Gastrocnemius medialis (tissue), 4 donors: ENCODE measurements at regions of chr6 and their contacts with region 1.

Region 1: DNA sequence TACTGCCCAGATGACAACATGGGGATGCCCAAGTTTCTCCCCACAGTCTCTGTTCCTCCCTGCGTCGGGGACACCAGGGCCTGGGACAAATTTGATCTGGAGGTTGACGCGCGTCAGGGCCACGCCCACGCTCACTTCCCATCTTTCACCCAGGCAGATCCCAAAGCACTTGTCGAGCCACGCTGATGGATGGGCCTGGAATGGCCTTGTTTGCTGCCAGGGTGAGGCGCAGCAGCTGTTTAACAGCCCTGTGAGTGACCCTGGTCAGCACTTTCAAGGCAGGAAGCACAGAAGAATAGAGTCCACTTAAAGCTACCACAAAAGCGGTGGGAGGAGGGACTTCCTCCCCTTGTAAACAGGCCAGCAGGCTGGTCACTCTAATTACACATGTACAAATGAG is 324.7 kb upstream of the JARID2 start:
- DNase-seq: peak; percentile 60 to 84
- ATAC-seq: peak; percentile 4 to 8
- H3K4me3 ChIP-seq: no peak overlapping the region
- H3K27ac ChIP-seq: peak overlapping the region; percentile 87 to 97 (median 92)
- H3K4me1 ChIP-seq: peaks cover 41 to 55% of the 10 kb centered on the region in 2 donors
- H3K27me3 ChIP-seq: no peaks in the 10 kb centered on the region
- CTCF ChIP-seq: no peak
- POLR2A ChIP-seq: peak in 1 of 2 donors; percentile 23

Region 2: GRCh38 chr6:14889191-14889590 is 32.0 kb before region 1 on chr6:
- in situ Hi-C with region 1: no loop called
- intact Hi-C with region 1: loop called (anchors 1 kb)
- DNase-seq: no peak
- ATAC-seq: peak in 1 of 2 donors; percentile 50
- H3K4me3 ChIP-seq: no peak overlapping the region
- H3K27ac ChIP-seq: peak overlapping the region; percentile 84 to 89 (median 86)
- H3K4me1 ChIP-seq: peaks cover 21 to 33% of the 10 kb centered on the region in 2 donors
- H3K27me3 ChIP-seq: no peaks in the 10 kb centered on the region
- CTCF ChIP-seq: peak in 1 of 5 experiments; percentile 3
- POLR2A ChIP-seq: no peak

Region 3: DNA sequence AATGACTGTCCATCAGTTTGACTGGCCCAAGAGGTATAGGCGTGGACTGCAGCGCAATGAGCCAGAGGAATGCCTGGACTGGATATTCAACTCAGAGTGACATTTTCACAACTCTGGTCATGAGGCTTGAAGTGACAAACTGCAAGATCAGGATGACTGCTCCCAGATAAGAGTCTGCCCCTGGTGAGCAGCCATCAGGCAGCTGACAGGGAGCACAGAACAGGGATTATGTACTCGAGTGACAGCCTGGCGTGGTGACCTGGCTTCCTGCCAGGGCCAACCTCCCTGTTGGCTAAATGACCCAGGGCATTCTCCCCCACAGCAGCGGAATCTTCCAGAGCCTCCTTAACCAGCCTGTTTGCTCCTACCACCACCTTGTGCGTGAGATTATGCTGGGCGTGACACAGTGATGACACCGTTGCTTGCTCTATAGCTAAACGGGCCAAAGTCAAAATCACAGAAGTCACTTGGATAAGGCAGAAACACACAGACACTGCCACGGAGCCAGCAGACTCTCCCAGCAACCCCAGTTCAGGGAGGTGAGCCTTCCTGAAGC is 115.6 kb after region 1 on chr6:
- in situ Hi-C with region 1: no loop called
- intact Hi-C with region 1: loop called (anchors 1 kb)
- DNase-seq: peak; percentile 93 to 98
- ATAC-seq: peak; percentile 93 to 96
- H3K4me3 ChIP-seq: peak overlapping the region; percentile 33 to 48 (median 38)
- H3K27ac ChIP-seq: peak overlapping the region; percentile 85 to 91 (median 88)
- H3K4me1 ChIP-seq: peaks cover 7 to 27% of the 10 kb centered on the region in 2 donors
- H3K27me3 ChIP-seq: no peaks in the 10 kb centered on the region
- CTCF ChIP-seq: no peak
- POLR2A ChIP-seq: peak; percentile 33 to 63

Region 4: DNA sequence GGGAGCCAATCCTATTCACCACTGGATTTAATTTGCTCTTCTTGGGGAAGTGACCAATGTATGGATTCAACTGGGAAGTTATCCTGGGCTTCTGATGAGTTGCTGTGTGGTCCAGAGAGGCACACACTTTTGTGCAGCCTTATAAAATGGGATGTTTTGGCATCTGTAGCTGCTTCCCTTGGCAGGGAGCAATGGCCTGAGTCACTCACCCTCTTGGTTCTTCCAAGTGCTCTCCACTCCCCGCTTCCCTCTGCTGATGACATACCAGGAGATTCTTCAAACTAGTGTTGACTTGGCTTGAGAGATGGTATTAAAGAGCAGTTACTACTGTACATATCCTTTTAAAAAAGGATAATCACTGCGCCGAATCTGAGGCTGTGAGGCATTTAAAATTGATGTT is 430.5 kb after region 1 on chr6:
- in situ Hi-C with region 1: no loop called
- intact Hi-C with region 1: loop called (anchors 10 kb)
- DNase-seq: peak; percentile 62 to 83
- ATAC-seq: peak; percentile 90 to 93
- H3K4me3 ChIP-seq: no peak overlapping the region
- H3K27ac ChIP-seq: peak overlapping the region; percentile 62 to 76 (median 71)
- H3K4me1 ChIP-seq: peaks cover 49 to 61% of the 10 kb centered on the region in 2 donors
- H3K27me3 ChIP-seq: no peaks in the 10 kb centered on the region
- CTCF ChIP-seq: no peak
- POLR2A ChIP-seq: no peak

Region 5: GRCh38 chr6:15441215-15441868 is 520.2 kb after region 1 on chr6:
- in situ Hi-C with region 1: no loop called
- intact Hi-C with region 1: loop called (anchors 5 kb)
- DNase-seq: peak; percentile 25 to 33
- ATAC-seq: peak; percentile 44 to 55
- H3K4me3 ChIP-seq: no peak overlapping the region
- H3K27ac ChIP-seq: peak overlapping the region; percentile 9 to 64 (median 32)
- H3K4me1 ChIP-seq: peaks cover 60 to 69% of the 10 kb centered on the region in 2 donors
- H3K27me3 ChIP-seq: no peaks in the 10 kb centered on the region
- CTCF ChIP-seq: peak; percentile 60 to 85 (median 80)
- POLR2A ChIP-seq: no peak

Region 6: DNA sequence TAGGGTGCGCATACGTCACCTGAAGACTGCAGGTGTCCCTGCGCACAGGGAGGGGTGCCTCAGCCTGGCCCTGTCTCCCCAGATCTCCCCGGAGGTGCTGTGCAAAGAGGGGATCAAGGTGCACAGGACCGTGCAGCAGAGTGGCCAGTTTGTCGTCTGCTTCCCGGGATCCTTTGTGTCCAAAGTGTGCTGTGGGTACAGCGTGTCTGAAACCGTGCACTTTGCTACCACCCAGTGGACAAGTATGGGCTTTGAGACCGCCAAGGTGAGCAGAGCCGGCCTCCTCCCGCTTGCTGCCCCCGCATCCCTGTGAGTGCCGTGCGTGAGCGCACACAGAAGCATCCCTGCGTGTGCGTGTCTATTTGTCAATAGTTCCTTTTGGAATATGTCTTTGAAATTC is 591.0 kb after region 1 on chr6:
- in situ Hi-C with region 1: no loop called
- intact Hi-C with region 1: loop called (anchors 10 kb)
- DNase-seq: peak in 1 of 2 donors; percentile 55
- ATAC-seq: peak in 1 of 2 donors; percentile 22
- H3K4me3 ChIP-seq: no peak overlapping the region
- H3K27ac ChIP-seq: peak overlapping the region; percentile 86 to 92 (median 88)
- H3K4me1 ChIP-seq: peaks cover 36 to 54% of the 10 kb centered on the region in 2 donors
- H3K27me3 ChIP-seq: no peaks in the 10 kb centered on the region
- CTCF ChIP-seq: peak; percentile 5 to 55 (median 41)
- POLR2A ChIP-seq: no peak